Ascending aorta (tissue), 2 donors: ENCODE measurements at regions of chr15 and their contacts with region 1.

Region 1: GRCh38 chr15:66356345-66357236 is at the start of gene TIPIN:
- DNase-seq: peak; percentile 79 to 98
- H3K4me3 ChIP-seq: peak within 1 kb of the TSS; percentile 73 to 80
- H3K27ac ChIP-seq: peak within 1 kb of the TSS; percentile 81 to 88
- H3K4me1 ChIP-seq: no peaks in the 10 kb centered on the region
- H3K27me3 ChIP-seq: no peaks in the 10 kb centered on the region
- CTCF ChIP-seq: no peak
- total RNA-seq, gene TIPIN: 6.1 TPM

Region 2: GRCh38 chr15:66497502-66498455 is 141.2 kb after region 1 on chr15 and contains the start of gene SNAPC5:
- intact Hi-C with region 1: loop called (anchors 2 kb)
- DNase-seq: peak; percentile 87 to 99
- H3K4me3 ChIP-seq: peak within 1 kb of the TSS; percentile 67 to 94
- H3K27ac ChIP-seq: peak within 1 kb of the TSS; percentile 87 to 91
- H3K4me1 ChIP-seq: peaks cover 5 to 14% of the 10 kb centered on the region in 2 donors
- H3K27me3 ChIP-seq: no peaks in the 10 kb centered on the region
- CTCF ChIP-seq: peak; percentile 95 to 98 (median 98)
- total RNA-seq, gene SNAPC5: 3.7 TPM

Region 3: GRCh38 chr15:66504563-66505429 is 148.2 kb after region 1 on chr15 and contains the starts of genes RPL4 and ZWILCH:
- intact Hi-C with region 1: loop called (anchors 2 kb)
- DNase-seq: peak; percentile 22 to 89
- H3K4me3 ChIP-seq: peak within 1 kb of the TSS; percentile 82 to 87
- H3K27ac ChIP-seq: peak within 1 kb of the TSS; percentile 93 to 96
- H3K4me1 ChIP-seq: peaks cover 9 to 21% of the 10 kb centered on the region in 2 donors
- H3K27me3 ChIP-seq: no peaks in the 10 kb centered on the region
- CTCF ChIP-seq: no peak
- total RNA-seq, gene RPL4: 2,799 TPM
- total RNA-seq, gene ZWILCH: 2.3 TPM